Activated CD8-positive, alpha-beta T cell treated with anti-CD3 and anti-CD28 coated beads for 36 hours (primary cell): ENCODE measurements at regions of chr1 and their contacts with region 1.

Region 1: GRCh38 chr1:204398217-204399081 is 13.2 kb downstream of the PPP1R15B start:
- DNase-seq: peak; percentile 70
- ATAC-seq: peak; percentile 97
- H3K4me3 Mint-ChIP-seq: no peak overlapping the region
- H3K27ac Mint-ChIP-seq: peak overlapping the region; percentile 81
- H3K4me1 Mint-ChIP-seq: peaks cover 20% of the 10 kb centered on the region
- H3K27me3 Mint-ChIP-seq: no peaks in the 10 kb centered on the region
- CTCF ChIP-seq: peak; percentile 98

Region 2: GRCh38 chr1:204213668-204214662 is 184.5 kb before region 1 on chr1 and contains the start of gene GOLT1A:
- CTCF ChIA-PET with region 1: interaction called, 10 read pairs
- POLR2A ChIA-PET with region 1: no interaction called
- intact Hi-C with region 1: no loop called
- DNase-seq: peak; percentile 67
- ATAC-seq: peak; percentile 86
- H3K4me3 Mint-ChIP-seq: peak within 1 kb of the TSS; percentile 28
- H3K27ac Mint-ChIP-seq: no peak within 1 kb of the TSS
- H3K4me1 Mint-ChIP-seq: peaks cover 13% of the 10 kb centered on the region
- H3K27me3 Mint-ChIP-seq: peaks cover 3% of the 10 kb centered on the region
- CTCF ChIP-seq: peak; percentile 62
- total RNA-seq, gene GOLT1A: not detected

Region 3: GRCh38 chr1:204341380-204341779 is 57.1 kb before region 1 on chr1:
- CTCF ChIA-PET with region 1: interaction called, 11 read pairs
- POLR2A ChIA-PET with region 1: no interaction called
- intact Hi-C with region 1: no loop called
- DNase-seq: no peak
- ATAC-seq: no peak
- H3K4me3 Mint-ChIP-seq: no peak overlapping the region
- H3K27ac Mint-ChIP-seq: no peak overlapping the region
- H3K4me1 Mint-ChIP-seq: peaks cover 7% of the 10 kb centered on the region
- H3K27me3 Mint-ChIP-seq: peaks cover 4% of the 10 kb centered on the region
- CTCF ChIP-seq: no peak

Region 4: GRCh38 chr1:204384994-204385352 is 13.5 kb before region 1 on chr1:
- CTCF ChIA-PET with region 1: interaction called, 87 read pairs
- POLR2A ChIA-PET with region 1: interaction called, 7 read pairs
- intact Hi-C with region 1: no loop called
- DNase-seq: no peak
- ATAC-seq: no peak
- H3K4me3 Mint-ChIP-seq: no peak overlapping the region
- H3K27ac Mint-ChIP-seq: no peak overlapping the region
- H3K4me1 Mint-ChIP-seq: peaks cover 4% of the 10 kb centered on the region
- H3K27me3 Mint-ChIP-seq: peaks cover under 1% of the 10 kb centered on the region
- CTCF ChIP-seq: no peak

Region 5: GRCh38 chr1:204431310-204432165 is 33.1 kb after region 1 on chr1:
- CTCF ChIA-PET with region 1: interaction called, 13 read pairs
- POLR2A ChIA-PET with region 1: no interaction called
- intact Hi-C with region 1: no loop called
- DNase-seq: peak; percentile 91
- ATAC-seq: peak; percentile 89
- H3K4me3 Mint-ChIP-seq: no peak overlapping the region
- H3K27ac Mint-ChIP-seq: no peak overlapping the region
- H3K4me1 Mint-ChIP-seq: peaks cover 3% of the 10 kb centered on the region
- H3K27me3 Mint-ChIP-seq: no peaks in the 10 kb centered on the region
- CTCF ChIP-seq: peak; percentile 91

Region 6: DNA sequence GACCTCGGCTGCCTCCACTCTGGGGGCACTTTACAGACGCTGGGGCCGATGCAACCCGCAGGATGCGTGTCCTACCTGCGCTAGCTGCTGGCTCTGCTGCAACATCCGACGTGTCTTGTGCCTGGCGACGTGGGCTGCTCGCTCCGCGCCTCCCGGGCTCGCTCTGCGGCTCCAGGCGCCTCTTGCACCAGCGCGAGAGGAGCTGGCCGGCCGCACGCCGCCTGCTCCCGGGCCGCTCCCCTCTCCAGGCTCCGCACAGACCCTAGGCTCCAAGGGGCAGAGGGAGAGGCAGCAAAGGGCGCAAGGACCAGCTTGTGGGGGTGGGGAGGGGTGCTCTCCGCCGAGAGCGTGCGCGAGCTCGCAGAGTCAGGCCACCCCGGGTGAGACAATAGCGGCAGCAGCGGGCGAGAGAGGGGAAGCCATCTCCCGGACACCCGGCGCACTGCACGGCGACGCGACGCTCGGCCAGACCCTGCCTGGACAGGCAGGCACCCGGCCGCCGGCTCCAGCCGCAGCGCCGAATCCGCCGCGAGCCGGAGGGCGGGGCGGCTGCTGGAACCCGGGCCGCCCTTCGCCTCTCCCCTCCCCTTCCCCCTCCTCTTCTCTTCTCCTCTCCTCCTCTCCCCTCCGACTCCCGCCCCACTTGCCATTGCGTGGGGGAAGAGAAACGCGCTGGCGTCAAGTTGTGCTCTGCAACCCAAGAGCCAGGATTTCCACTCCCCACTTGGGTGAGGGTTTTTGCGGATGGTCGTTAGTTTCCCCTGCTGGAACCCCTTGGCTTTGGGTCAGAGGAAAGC is 96.0 kb after region 1 on chr1 and contains the start of gene PIK3C2B:
- CTCF ChIA-PET with region 1: interaction called, 23 read pairs
- POLR2A ChIA-PET with region 1: interaction called, 4 read pairs
- intact Hi-C with region 1: no loop called
- DNase-seq: peak; percentile 81
- ATAC-seq: peak; percentile 80
- H3K4me3 Mint-ChIP-seq: peak within 1 kb of the TSS; percentile 88
- H3K27ac Mint-ChIP-seq: peak within 1 kb of the TSS; percentile 94
- H3K4me1 Mint-ChIP-seq: peaks cover 46% of the 10 kb centered on the region
- H3K27me3 Mint-ChIP-seq: no peaks in the 10 kb centered on the region
- CTCF ChIP-seq: peak; percentile 58
- total RNA-seq, gene PIK3C2B: 26.6 to 28.9 TPM